SK-N-SH (cell line): ENCODE measurements at regions of chr1 and their contacts with region 1.

Region 1: DNA sequence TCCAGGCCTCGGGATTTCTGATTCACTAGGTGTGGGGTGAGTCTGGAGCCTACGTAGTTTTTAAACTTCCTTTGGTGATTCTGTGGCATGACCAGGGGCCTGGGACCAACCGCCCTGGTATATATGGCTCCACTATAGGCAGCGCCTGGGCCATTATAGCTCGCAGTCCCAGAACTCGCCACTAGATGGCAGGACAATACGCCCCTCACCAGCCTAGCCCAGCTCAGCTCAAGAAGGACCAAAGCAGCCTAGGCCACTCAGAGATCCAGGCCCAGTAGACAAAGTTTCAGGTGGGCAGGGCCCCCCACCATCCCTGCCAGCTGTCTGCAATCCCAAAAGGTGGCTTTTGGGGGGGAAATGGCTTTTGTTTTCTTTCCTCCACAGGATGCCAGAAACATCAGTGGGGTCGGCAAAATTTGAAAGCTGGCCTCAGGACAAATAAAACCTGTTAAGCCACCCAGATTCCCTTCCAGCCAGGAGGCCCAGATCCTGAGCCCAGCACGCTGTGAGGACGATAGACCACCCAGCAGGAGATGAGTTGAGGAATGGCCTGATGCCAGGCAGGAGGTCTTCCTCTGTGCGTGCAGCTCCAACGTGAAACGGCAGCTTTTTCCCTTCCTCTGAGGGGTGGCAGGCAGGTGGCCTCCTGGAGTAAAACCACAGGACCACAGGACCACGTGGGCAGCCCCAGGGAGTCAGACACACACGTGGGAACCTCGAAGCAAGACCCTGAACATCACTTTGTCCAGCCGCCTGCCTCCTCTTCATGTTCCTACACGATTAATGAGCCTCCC is 24.8 kb upstream of the TMEM51 start:
- DNase-seq: peak; percentile 88
- H3K4me3 ChIP-seq: peak overlapping the region in 1 of 2 experiments; percentile 43; a peak in 1 of 4 replicates
- H3K27ac ChIP-seq: peak overlapping the region in 1 of 2 experiments; percentile 71; a peak in 2 of 4 replicates
- H3K4me1 ChIP-seq: peaks cover 0 to 7% of the 10 kb centered on the region in 2 experiments; a peak in 1 of 4 replicates
- H3K27me3 ChIP-seq: no peaks in the 10 kb centered on the region
- CTCF ChIP-seq: peak; percentile 90
- EP300 ChIP-seq: peak in 1 of 2 experiments; percentile 38; a peak in 1 of 4 replicates
- RAD21 ChIP-seq: peak; percentile 96

Region 2: GRCh38 chr1:15038232-15039016 is 90.3 kb before region 1 on chr1:
- CTCF ChIA-PET with region 1: no interaction called
- POLR2A ChIA-PET with region 1: no interaction called
- DNase-seq: peak; percentile 55
- H3K4me3 ChIP-seq: no peak overlapping the region; a peak in 1 of 4 replicates
- H3K27ac ChIP-seq: no peak overlapping the region
- H3K4me1 ChIP-seq: no peaks in the 10 kb centered on the region
- H3K27me3 ChIP-seq: no peaks in the 10 kb centered on the region
- CTCF ChIP-seq: peak; percentile 56
- EP300 ChIP-seq: no peak
- RAD21 ChIP-seq: peak; percentile 38

Region 3: GRCh38 chr1:15110875-15111230 is 17.9 kb before region 1 on chr1:
- CTCF ChIA-PET with region 1: interaction called, 11 read pairs
- POLR2A ChIA-PET with region 1: no interaction called
- DNase-seq: no peak
- H3K4me3 ChIP-seq: no peak overlapping the region
- H3K27ac ChIP-seq: no peak overlapping the region
- H3K4me1 ChIP-seq: peaks cover 0 to 6% of the 10 kb centered on the region in 2 experiments; a peak in 2 of 4 replicates
- H3K27me3 ChIP-seq: no peaks in the 10 kb centered on the region
- CTCF ChIP-seq: no peak
- EP300 ChIP-seq: no peak
- RAD21 ChIP-seq: no peak

Region 4: GRCh38 chr1:15141935-15142539 is 13.3 kb after region 1 on chr1:
- CTCF ChIA-PET with region 1: interaction called, 40 read pairs
- POLR2A ChIA-PET with region 1: interaction called, 5 read pairs
- DNase-seq: no peak
- H3K4me3 ChIP-seq: no peak overlapping the region
- H3K27ac ChIP-seq: peak overlapping the region in 1 of 2 experiments; percentile 97; a peak in 2 of 4 replicates
- H3K4me1 ChIP-seq: peaks cover 3 to 45% of the 10 kb centered on the region in 2 experiments; a peak in 3 of 4 replicates
- H3K27me3 ChIP-seq: no peaks in the 10 kb centered on the region
- CTCF ChIP-seq: peak; percentile 22; the same call in 1 of the 2 replicates
- EP300 ChIP-seq: peak; percentile 37 to 87; a peak in 3 of 4 replicates
- RAD21 ChIP-seq: no peak

Region 5: GRCh38 chr1:15178571-15179484 is 50.1 kb after region 1 on chr1:
- CTCF ChIA-PET with region 1: interaction called, 11 read pairs
- POLR2A ChIA-PET with region 1: no interaction called
- DNase-seq: no peak
- H3K4me3 ChIP-seq: no peak overlapping the region
- H3K27ac ChIP-seq: peak overlapping the region; percentile 88 to 91
- H3K4me1 ChIP-seq: peaks cover 11 to 46% of the 10 kb centered on the region in 2 experiments; a peak in 3 of 4 replicates
- H3K27me3 ChIP-seq: no peaks in the 10 kb centered on the region
- CTCF ChIP-seq: no peak
- EP300 ChIP-seq: peak in 1 of 2 experiments; percentile 90; a peak in 2 of 4 replicates
- RAD21 ChIP-seq: no peak

Region 6: GRCh38 chr1:15206418-15207030 is 77.8 kb after region 1 on chr1:
- CTCF ChIA-PET with region 1: interaction called, 10 read pairs
- POLR2A ChIA-PET with region 1: no interaction called
- DNase-seq: no peak
- H3K4me3 ChIP-seq: no peak overlapping the region
- H3K27ac ChIP-seq: no peak overlapping the region; a peak in 1 of 4 replicates
- H3K4me1 ChIP-seq: peaks cover 7 to 44% of the 10 kb centered on the region in 2 experiments; a peak in 1 of 4 replicates
- H3K27me3 ChIP-seq: no peaks in the 10 kb centered on the region
- CTCF ChIP-seq: no peak
- EP300 ChIP-seq: peak in 1 of 2 experiments; percentile 47; a peak in 1 of 4 replicates
- RAD21 ChIP-seq: no peak

Region 7: DNA sequence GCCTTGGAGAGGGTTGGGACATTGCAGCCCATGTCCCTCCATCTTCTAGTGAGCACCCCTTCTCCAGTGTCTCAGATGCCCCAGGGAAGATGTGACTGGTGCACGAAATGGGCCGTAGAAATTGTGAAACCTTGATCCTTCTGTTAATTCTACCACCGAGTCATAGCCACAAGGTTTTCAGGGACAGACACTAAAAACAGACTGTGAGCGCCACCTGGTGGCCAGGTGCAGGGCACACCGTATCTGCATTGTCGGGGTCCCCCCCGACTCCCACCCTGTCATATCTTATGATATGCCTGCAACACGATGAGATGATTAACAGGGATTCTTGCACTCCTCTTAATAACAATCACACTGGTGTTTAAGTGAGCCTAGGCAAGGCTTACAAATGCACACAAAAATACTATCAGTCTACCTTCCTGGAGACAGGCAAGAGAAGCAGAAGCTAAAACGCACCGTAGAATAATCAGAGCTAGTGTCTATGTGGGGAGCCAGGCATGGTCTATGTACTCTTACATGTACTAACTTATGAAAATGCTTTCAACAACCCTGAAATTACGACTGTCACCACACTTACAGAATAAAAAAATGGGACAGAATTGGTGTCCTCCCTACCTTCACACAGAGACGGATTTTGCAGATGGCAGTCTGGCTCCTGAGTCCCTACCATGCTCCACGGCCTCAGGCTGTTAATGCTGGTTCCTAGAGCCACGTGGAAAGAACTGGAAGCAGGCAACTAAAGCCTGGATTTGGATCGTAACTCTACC is 176.2 kb after region 1 on chr1:
- CTCF ChIA-PET with region 1: interaction called, 16 read pairs
- POLR2A ChIA-PET with region 1: no interaction called
- DNase-seq: peak; percentile 79
- H3K4me3 ChIP-seq: peak overlapping the region in 1 of 2 experiments; percentile 38; a peak in 1 of 4 replicates
- H3K27ac ChIP-seq: no peak overlapping the region
- H3K4me1 ChIP-seq: peaks cover 0 to 6% of the 10 kb centered on the region in 2 experiments; a peak in 1 of 4 replicates
- H3K27me3 ChIP-seq: no peaks in the 10 kb centered on the region
- CTCF ChIP-seq: peak; percentile 94
- EP300 ChIP-seq: no peak
- RAD21 ChIP-seq: peak; percentile 84